Prostate gland (tissue), 2 donors: ENCODE measurements at regions of chr7 and their contacts with region 1.

Region 1: GRCh38 chr7:36487756-36488336 is 98.2 kb downstream of the ANLN start:
- DNase-seq: peak; percentile 33
- H3K4me3 ChIP-seq: no peak overlapping the region
- H3K27ac ChIP-seq: no peak overlapping the region
- H3K4me1 ChIP-seq: no peaks in the 10 kb centered on the region
- H3K27me3 ChIP-seq: no peaks in the 10 kb centered on the region
- CTCF ChIP-seq: peak; percentile 14 to 85 (median 70)
- POLR2A ChIP-seq: no peak

Region 2: GRCh38 chr7:36303202-36304098 is 184.4 kb before region 1 on chr7:
- intact Hi-C with region 1: no loop called
- DNase-seq: peak; percentile 90
- H3K4me3 ChIP-seq: no peak overlapping the region
- H3K27ac ChIP-seq: peak overlapping the region; percentile 31 to 51
- H3K4me1 ChIP-seq: peaks cover 8% of the 10 kb centered on the region
- H3K27me3 ChIP-seq: no peaks in the 10 kb centered on the region
- CTCF ChIP-seq: no peak
- POLR2A ChIP-seq: no peak

Region 3: GRCh38 chr7:36670585-36671431 is 183.0 kb after region 1 on chr7:
- intact Hi-C with region 1: loop called (anchors 5 kb)
- DNase-seq: peak; percentile 42
- H3K4me3 ChIP-seq: no peak overlapping the region
- H3K27ac ChIP-seq: no peak overlapping the region
- H3K4me1 ChIP-seq: no peaks in the 10 kb centered on the region
- H3K27me3 ChIP-seq: no peaks in the 10 kb centered on the region
- CTCF ChIP-seq: peak; percentile 63 to 75 (median 68)
- POLR2A ChIP-seq: no peak